H1 (cell line): ENCODE measurements at regions of chr1 and their contacts with region 1.

Region 1: DNA sequence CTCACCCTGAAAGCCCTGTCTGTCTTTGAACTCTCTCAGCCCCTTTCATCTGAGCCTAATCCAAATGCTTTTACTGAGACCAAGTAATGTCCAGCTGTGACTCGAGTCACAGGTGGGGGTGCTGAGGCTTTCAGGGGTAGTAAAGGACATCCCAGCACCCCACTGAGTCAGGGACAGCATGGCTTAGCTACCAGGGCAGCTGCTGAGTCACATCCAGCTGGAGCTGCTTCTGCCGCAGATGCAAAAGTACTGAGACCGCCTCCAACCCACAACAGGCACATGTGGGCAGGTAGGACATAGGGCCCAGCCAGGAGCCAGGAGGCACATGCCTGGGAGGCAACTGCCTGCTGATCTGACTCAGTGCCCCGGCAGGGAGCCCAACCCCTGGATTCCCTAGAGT is 6.7 kb upstream of the VSIG8 start:
- DNase-seq: no peak
- H3K4me3 ChIP-seq: no peak overlapping the region
- H3K27ac ChIP-seq: no peak overlapping the region
- H3K4me1 ChIP-seq: no peaks in the 10 kb centered on the region; a peak in 1 of 7 replicates
- H3K27me3 ChIP-seq: no peaks in the 10 kb centered on the region
- CTCF ChIP-seq: no peak
- EP300 ChIP-seq: no peak
- POLR2A ChIP-seq: no peak
- RAD21 ChIP-seq: no peak

Region 2: DNA sequence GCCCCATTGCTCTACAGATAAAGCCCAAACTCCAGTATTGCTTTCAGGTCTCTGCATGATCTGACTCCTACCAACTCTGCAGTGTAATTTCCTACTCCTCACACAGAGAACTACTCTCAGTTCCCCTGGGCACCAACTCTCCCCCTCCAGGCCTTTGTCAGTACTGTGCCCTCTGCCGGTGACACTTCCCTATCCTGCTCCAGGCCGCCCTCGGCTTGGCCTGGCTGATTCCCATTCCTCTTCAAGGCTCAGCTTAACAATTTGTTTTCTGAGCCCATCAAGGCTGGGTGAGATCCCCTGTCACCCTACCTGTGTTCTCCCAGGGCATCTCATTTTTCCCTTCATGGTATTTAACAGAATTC is 39.9 kb before region 1 on chr1:
- CTCF ChIA-PET with region 1: interaction called, 10 read pairs
- POLR2A ChIA-PET with region 1: no interaction called
- DNase-seq: peak in 1 of 2 experiments; percentile 67
- H3K4me3 ChIP-seq: no peak overlapping the region
- H3K27ac ChIP-seq: no peak overlapping the region
- H3K4me1 ChIP-seq: peaks cover 0 to 4% (median 2%) of the 10 kb centered on the region in 4 experiments; a peak in 1 of 7 replicates
- H3K27me3 ChIP-seq: peaks cover 0 to 15% (median 3%) of the 10 kb centered on the region in 4 experiments; a peak in 6 of 7 replicates
- CTCF ChIP-seq: peak; percentile 73 to 78 (median 78)
- EP300 ChIP-seq: no peak
- POLR2A ChIP-seq: no peak
- RAD21 ChIP-seq: peak; percentile 43 to 59

Region 3: GRCh38 chr1:159881930-159882839 is 13.0 kb after region 1 on chr1:
- CTCF ChIA-PET with region 1: interaction called, 13 read pairs
- POLR2A ChIA-PET with region 1: interaction called, 3 read pairs
- DNase-seq: no peak
- H3K4me3 ChIP-seq: no peak overlapping the region
- H3K27ac ChIP-seq: no peak overlapping the region
- H3K4me1 ChIP-seq: no peaks in the 10 kb centered on the region
- H3K27me3 ChIP-seq: no peaks in the 10 kb centered on the region; a peak in 1 of 7 replicates
- CTCF ChIP-seq: no peak
- EP300 ChIP-seq: no peak
- POLR2A ChIP-seq: no peak
- RAD21 ChIP-seq: no peak

Region 4: GRCh38 chr1:159908031-159908940 is 39.1 kb after region 1 on chr1:
- CTCF ChIA-PET with region 1: no interaction called
- POLR2A ChIA-PET with region 1: no interaction called
- DNase-seq: no peak
- H3K4me3 ChIP-seq: no peak overlapping the region
- H3K27ac ChIP-seq: no peak overlapping the region
- H3K4me1 ChIP-seq: peaks cover 3 to 17% (median 12%) of the 10 kb centered on the region in 4 experiments
- H3K27me3 ChIP-seq: no peaks in the 10 kb centered on the region; a peak in 1 of 7 replicates
- CTCF ChIP-seq: no peak
- EP300 ChIP-seq: no peak
- POLR2A ChIP-seq: no peak
- RAD21 ChIP-seq: no peak